Cardiac septum (tissue), 1 donor: ENCODE measurements at regions of chr7 and their contacts with region 1.

Region 1: DNA sequence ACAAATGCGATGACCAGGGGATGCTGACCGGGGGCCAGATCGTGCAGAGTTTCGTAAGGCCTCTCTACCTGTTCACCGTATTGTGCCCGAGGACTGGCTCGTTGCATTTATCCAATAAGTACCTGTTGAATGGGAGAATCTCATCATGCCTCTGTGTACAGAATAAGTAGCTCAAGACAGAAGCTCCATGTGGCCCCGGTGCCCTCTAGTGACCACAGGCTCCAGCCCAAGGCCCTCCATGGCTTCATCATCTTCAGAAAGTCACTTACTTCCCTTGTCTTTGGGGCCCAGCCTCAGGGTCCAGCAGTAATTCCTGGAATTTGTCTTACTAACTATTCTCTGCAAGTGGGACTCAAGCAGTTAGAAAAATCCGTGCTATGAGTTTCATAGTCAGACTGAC is 151.0 kb downstream of the CHN2 start:
- DNase-seq: no peak

Region 2: GRCh38 chr7:28926871-28927597 is 418.6 kb before region 1 on chr7:
- intact Hi-C with region 1: loop called (anchors 5 kb)
- DNase-seq: peak; percentile 82

Region 3: GRCh38 chr7:29119538-29120199 is 225.9 kb before region 1 on chr7:
- intact Hi-C with region 1: loop called (anchors 5 kb)
- DNase-seq: no peak

Region 4: GRCh38 chr7:29627631-29628030 is 282.0 kb after region 1 on chr7:
- intact Hi-C with region 1: no loop called
- DNase-seq: no peak